HEK293 (cell line): ENCODE measurements at regions of chr17 and their contacts with region 1.

Region 1: DNA sequence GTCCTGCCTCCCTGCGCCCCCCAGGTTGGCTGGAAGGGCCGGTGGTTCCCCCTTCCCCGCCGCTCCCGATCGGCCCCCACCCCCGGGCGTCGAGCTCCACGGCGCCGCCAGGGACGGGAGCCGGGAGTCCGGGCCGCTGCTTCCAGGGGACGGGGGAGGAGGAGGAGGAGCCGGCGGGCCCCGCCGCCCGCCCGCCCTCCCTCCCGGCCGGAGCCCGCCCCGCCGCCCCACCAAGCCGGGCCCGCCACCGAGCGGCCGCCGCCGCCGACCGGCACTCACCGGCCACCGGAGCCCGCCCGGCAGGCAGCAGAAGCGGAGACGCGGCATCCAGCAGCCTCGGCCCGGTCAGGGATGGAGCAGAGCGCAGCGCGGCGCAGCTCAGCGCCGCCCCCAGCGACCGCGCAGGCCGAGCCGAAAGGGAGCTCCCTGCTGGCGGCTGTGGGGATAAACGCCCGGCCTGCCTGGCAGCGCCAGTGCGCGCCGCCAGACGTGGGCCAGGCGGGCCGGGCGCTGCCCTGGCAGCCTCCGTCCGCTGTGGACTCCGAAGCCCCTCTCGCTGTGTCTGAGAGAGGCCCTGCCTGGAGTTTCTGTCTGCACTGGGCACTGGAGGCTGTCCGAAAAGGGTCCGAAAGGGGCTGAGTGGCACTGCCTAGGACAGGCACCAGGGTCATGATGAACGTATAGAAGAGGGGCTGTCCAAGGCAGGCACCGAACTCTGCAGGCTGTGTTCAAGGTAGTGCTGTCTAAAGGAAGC is at the start of gene MYO18A:
- H3K4me3 ChIP-seq: peak within 1 kb of the TSS; percentile 57
- H3K27ac ChIP-seq: peak within 1 kb of the TSS; percentile 20; the same call in 1 of the 2 replicates
- H3K4me1 ChIP-seq: peaks cover 3% of the 10 kb centered on the region; the same call in 1 of the 2 replicates
- CTCF ChIP-seq: peak; percentile 92

Region 2: GRCh38 chr17:28861393-28862203 is 318.6 kb before region 1 on chr17:
- CTCF ChIA-PET with region 1: no interaction called
- POLR2A ChIA-PET with region 1: no interaction called
- H3K4me3 ChIP-seq: no peak overlapping the region
- H3K27ac ChIP-seq: no peak overlapping the region
- H3K4me1 ChIP-seq: no peaks in the 10 kb centered on the region
- CTCF ChIP-seq: no peak

Region 3: DNA sequence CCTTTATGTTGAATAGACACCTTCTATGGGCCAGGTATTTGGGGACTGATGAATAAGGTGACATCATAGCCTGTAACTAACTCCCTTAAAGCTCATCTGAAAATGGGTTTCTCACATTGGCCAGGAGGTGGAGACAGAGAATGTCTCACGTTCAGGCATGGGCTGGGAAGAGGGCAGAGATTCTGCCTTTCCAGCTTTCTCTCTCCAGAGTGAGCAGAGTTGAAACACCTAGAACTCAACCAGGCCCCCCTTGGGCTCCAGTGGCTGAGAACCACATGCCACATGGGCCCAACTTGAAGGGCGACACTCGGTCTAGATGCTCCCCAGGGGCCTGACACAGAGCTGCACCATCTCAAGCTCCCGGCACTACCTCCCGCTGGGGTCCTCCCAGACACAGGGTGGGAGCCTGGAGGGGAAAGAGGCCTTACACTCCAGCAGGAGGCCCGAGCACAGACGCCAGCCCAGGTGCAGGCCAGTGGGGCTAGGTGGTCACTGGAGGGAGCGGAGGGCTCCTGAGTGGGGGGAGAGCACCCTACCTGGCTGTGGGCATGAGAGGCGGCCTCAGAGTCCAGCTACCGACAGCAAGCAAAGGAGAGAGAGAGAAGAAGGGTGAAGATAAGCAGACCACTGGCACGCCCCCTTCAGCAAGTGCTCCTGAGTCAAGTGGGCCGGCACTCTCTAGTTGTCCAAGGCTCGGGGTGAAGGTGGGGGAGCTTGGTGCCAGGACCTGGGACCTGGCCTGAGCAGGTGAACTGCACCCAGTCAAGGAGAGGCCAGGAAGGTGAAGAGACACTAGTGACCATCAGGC is 55.9 kb before region 1 on chr17:
- CTCF ChIA-PET with region 1: interaction called, 12 read pairs
- POLR2A ChIA-PET with region 1: interaction called, 6 read pairs
- H3K4me3 ChIP-seq: no peak overlapping the region
- H3K27ac ChIP-seq: no peak overlapping the region
- H3K4me1 ChIP-seq: no peaks in the 10 kb centered on the region
- CTCF ChIP-seq: peak; percentile 69

Region 4: DNA sequence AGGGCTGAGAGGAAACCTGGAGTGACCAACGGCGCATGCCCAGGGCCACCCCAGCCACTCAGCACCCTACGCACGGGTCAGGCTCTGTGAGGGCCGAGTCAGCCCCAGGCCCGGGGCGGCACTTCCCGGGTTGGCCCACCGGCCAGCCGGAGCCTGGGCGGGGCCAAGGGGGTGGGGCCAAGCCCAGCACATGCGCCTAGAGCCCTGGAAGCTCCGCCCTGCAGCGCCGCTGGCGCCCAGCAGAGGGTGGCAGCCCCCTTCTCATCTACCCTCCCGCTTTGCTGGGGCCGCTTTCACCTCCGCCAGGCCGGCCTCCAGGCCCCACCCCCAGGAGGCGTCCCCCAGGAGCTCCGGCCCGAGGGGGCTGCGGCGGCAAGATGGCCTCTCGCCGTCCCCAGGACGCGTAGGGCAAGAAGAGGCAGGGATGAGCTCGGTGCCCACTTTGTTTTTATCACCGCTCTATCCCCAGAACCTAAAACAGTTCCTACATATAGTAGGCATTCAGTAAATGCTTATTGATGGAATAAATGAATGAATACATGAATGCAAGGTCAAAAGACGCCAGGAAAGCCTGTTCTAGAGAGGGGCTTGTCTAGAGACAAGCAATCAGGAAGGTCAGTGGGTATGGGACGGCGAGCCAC is 31.3 kb before region 1 on chr17:
- CTCF ChIA-PET with region 1: interaction called, 175 read pairs
- POLR2A ChIA-PET with region 1: interaction called, 60 read pairs
- H3K4me3 ChIP-seq: peak overlapping the region; percentile 44
- H3K27ac ChIP-seq: peak overlapping the region; percentile 48
- H3K4me1 ChIP-seq: peaks cover 10% of the 10 kb centered on the region
- CTCF ChIP-seq: peak; percentile 97

Region 5: DNA sequence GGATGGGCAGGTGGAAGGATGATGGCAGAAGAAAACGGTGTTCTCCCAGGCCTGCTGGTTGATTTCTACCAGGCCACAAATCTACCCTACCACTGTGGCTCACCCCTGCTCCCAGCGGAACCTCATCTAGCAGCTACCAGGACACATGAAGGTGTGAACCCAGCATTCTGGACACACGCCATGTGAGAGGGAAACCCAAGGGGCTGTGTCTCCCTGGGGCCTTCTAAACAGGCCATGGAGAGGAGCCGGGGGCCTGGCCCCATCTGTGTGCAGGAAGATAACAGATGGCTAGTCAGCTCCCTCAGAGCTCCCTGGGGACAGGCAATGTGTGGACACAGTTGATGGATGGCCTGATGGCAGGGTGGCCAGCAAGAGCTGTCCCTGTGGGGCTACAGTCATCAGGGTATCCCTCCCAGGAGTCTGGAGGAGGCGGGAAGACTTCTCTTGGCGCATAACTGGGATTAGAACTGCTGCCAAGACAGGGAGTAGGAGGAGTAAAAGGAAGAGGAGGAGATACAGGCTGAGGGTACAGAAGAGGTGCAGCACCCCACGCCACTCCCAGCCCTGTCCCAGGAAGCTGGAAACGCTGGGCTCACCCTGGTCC is 17.4 kb before region 1 on chr17:
- CTCF ChIA-PET with region 1: interaction called, 13 read pairs
- POLR2A ChIA-PET with region 1: interaction called, 4 read pairs
- H3K4me3 ChIP-seq: no peak overlapping the region
- H3K27ac ChIP-seq: no peak overlapping the region
- H3K4me1 ChIP-seq: peaks cover 5% of the 10 kb centered on the region; the same call in 1 of the 2 replicates
- CTCF ChIP-seq: no peak

Region 6: GRCh38 chr17:29195465-29196081 is 15.4 kb after region 1 on chr17:
- CTCF ChIA-PET with region 1: interaction called, 44 read pairs
- POLR2A ChIA-PET with region 1: interaction called, 4 read pairs
- H3K4me3 ChIP-seq: no peak overlapping the region
- H3K27ac ChIP-seq: no peak overlapping the region
- H3K4me1 ChIP-seq: no peaks in the 10 kb centered on the region
- CTCF ChIP-seq: no peak

Region 7: DNA sequence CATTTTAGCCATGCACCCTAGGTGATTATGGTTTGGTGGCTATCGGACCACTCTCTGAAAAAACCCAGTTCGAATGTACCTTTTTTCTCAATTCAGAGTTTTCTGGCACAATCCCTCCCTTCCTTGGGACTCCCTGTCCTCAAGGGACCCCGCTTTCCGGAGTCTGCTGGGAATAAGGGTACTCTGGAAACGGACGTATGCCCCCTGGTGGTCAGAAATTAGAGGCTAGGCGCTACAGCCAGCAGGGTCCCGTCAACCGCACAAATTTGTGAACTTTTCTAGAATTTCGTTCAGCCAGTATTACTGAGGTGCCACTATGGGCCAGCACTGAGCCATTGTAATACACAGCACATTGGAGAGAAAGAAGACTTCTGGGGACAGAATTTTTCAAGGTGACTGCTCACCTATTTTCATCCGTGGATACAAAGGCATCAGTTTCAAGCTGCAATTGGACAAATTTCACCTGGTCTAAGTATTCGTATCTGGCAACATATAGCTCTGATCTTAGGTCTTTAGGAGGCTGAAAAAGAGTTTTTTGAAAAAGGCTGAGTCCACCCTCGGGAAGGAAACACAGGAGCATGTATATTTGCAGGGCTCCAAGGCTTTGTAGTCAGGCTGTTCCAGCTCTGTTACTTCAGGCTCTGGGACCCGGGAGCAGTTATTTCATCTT is 39.3 kb after region 1 on chr17:
- CTCF ChIA-PET with region 1: interaction called, 65 read pairs
- POLR2A ChIA-PET with region 1: no interaction called
- H3K4me3 ChIP-seq: no peak overlapping the region
- H3K27ac ChIP-seq: no peak overlapping the region
- H3K4me1 ChIP-seq: no peaks in the 10 kb centered on the region
- CTCF ChIP-seq: peak; percentile 94